Gastrocnemius medialis (tissue), 4 donors: ENCODE measurements at regions of chr6 and their contacts with region 1.

Region 1: GRCh38 chr6:89080542-89081422 is at the start of gene PNRC1:
- DNase-seq: peak; percentile 100
- ATAC-seq: peak; percentile 70 to 75
- H3K4me3 ChIP-seq: peak within 1 kb of the TSS; percentile 94 to 99 (median 95)
- H3K27ac ChIP-seq: peak within 1 kb of the TSS; percentile 98 to 100 (median 99)
- H3K4me1 ChIP-seq: peaks cover 20 to 30% of the 10 kb centered on the region in 2 donors
- H3K27me3 ChIP-seq: no peaks in the 10 kb centered on the region
- CTCF ChIP-seq: peak in 2 of 5 experiments; percentile 5 to 13
- POLR2A ChIP-seq: peak; percentile 100
- total RNA-seq, gene PNRC1: 229 to 458 (median 311) TPM

Region 2: DNA sequence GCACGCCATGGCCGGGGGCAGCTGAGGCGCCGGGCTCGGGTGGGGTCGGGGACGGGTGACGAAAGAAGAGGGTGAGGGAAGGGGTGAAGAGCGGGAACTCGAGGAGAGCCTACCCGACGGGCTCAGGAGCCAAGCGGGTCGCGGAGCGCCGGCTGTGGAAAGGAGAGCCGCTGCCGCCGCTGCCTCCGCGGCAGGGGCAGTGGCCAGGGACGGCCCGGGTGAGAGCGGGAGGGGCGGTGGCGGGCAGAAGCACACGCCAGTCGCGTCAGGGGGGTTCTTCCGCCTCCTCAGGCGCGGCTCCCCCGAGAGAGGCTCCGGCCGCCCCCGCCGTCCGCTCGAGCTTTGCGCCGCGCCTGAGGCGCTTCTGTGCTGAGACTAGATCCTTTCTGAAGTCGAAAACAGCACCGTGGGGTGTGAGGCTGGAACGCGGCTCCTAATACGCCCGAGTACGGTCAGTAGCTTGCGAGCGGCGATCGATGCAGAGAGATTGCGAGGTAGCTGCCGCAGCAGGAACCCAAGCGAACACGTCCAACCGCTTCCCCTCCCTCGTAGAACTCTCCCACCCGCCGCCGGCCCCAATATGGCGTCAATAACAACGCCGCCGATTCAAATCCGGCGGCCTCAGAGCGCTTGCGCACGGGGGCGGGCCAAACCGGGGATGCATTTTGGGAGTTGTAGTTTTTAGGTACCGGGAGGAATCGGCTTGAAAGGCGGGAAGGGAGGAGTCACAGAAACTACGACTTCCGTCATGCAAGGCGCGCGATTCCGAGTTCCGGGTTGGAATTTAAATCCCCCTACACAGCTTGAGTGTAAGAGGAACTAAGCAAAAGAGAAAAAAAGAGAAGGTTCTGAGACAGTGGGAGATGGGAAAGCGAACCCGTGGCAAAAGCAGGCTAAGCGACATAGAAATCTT is 1378.8 kb before region 1 on chr6 and contains the start of gene AKIRIN2:
- in situ Hi-C with region 1: no loop called
- intact Hi-C with region 1: loop called (anchors 5 kb)
- DNase-seq: peak; percentile 97
- ATAC-seq: peak; percentile 80 to 81
- H3K4me3 ChIP-seq: peak within 1 kb of the TSS; percentile 86 to 94 (median 94)
- H3K27ac ChIP-seq: peak within 1 kb of the TSS; percentile 94 to 99 (median 97)
- H3K4me1 ChIP-seq: peaks cover 24 to 32% of the 10 kb centered on the region in 2 donors
- H3K27me3 ChIP-seq: no peaks in the 10 kb centered on the region
- CTCF ChIP-seq: no peak
- POLR2A ChIP-seq: peak; percentile 99 to 100
- total RNA-seq, gene AKIRIN2: 25.6 to 44.5 (median 33.1) TPM

Region 3: DNA sequence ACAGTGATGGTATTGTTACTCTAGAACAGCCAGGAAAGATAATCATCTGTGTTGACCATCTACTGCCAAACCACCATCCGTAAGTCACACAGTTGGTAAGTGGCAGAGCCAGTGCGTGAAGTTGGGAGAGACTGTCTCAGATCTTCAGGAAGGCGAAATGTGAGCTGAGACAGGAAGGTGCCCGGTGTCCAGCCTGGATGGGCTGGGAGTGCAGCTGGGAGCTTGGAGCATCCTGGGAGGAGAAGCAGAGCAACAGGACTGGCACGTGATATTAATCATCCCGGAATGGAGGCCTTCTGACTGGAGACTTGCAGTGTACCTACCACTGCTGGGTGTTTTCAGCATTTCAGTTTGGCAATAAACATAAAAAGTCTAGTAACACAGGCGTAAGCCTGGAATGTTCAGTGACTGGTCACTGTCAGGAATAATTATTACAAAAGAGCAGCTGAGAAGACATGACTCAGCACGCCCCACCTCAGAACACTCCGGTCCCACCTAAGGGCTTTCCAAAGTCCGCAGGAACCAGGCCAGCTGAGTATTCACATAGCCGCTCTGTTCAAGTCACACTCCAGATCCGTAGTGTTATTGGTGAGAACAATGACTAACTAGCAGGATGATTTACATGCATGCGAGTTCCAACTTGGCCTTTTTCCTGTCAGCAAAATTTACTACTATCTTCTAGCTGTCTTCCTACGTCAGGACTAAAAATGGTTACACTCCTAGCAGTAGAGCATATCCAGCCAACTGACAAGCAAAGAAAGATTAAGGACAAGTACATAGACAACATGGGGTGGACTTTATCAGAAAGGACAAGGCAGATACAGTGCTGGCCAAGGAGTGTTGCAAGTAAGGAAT is 45.3 kb before region 1 on chr6:
- in situ Hi-C with region 1: loop called in 1 of 4 experiments (anchors 5 kb)
- intact Hi-C with region 1: loop called (anchors 1 kb)
- DNase-seq: peak; percentile 97 to 98
- ATAC-seq: peak; percentile 81 to 87
- H3K4me3 ChIP-seq: peak overlapping the region in 3 of 4 donors; percentile 14 to 43 (median 24)
- H3K27ac ChIP-seq: peak overlapping the region; percentile 90 to 94 (median 92)
- H3K4me1 ChIP-seq: peaks cover 38 to 46% of the 10 kb centered on the region in 2 donors
- H3K27me3 ChIP-seq: no peaks in the 10 kb centered on the region
- CTCF ChIP-seq: no peak
- POLR2A ChIP-seq: peak; percentile 75 to 82

Region 4: DNA sequence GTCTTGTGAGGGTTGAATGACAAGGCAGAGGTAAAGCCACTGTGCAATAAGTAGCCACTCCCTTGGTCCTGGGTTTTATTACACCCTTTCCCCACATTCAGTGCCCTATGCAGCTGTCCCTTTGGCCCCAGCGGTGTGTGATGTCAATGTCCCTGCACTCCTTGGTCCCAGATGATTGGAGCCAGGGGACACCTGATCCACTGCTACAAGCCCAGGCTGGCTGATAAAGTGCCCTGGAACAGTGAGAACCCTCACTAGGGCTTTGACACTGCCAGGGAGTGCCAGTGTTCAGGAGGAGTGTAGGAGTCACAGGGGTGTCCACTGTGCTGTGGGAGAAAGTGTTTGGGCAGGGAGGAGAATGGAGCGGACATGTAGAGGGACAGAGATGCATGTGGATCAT is 106.0 kb after region 1 on chr6:
- in situ Hi-C with region 1: no loop called
- intact Hi-C with region 1: loop called (anchors 2 kb)
- DNase-seq: peak; percentile 84 to 98
- ATAC-seq: peak; percentile 98
- H3K4me3 ChIP-seq: no peak overlapping the region
- H3K27ac ChIP-seq: peak overlapping the region; percentile 76 to 95 (median 84)
- H3K4me1 ChIP-seq: peaks cover 8 to 18% of the 10 kb centered on the region in 2 donors
- H3K27me3 ChIP-seq: no peaks in the 10 kb centered on the region
- CTCF ChIP-seq: no peak
- POLR2A ChIP-seq: peak; percentile 82 to 92

Region 5: DNA sequence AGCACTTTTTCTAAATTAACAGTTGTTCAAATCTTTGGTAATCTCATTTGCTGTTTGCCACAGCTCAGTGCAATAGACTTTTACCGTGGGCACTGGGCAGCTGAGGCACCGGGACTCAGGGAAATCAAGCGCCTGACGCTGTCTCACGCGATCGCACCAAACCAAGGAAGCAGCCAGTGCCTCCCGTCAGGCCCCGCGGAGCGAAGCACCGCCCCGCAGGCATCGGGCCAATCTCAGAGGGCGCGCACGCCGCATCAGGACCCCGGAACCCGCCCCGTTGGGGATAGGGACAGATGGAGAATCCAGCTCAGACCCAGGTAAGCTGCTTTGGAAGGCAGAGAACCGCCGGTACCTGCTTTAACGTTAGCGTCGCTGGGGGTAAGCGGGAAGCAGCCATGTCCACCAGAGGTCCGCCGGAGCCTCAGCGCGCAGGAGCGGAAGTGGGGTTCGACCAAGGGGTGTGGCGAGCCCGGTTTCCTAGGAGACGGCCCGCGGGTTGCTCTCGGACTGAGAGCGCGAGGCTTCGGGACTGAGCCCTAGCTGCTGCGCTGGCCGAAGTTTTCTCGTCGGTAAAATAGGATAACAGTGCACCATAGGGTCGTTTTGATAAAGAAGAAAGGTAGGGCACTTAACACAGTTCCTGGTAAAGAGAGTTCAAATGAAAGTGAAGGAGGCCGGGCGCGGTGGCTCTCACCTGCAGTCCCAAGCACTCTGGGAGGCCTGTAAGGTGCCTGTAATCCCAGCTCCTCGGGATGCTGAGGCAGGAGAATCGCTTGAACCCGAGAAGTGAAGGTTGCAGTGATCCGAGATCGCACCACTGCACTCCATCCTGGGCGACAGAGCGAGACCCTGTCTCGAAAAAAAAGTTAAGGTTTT is 557.8 kb after region 1 on chr6 and contains the start of gene LYRM2:
- in situ Hi-C with region 1: no loop called
- intact Hi-C with region 1: loop called (anchors 5 kb)
- DNase-seq: peak; percentile 93 to 94
- ATAC-seq: peak; percentile 97 to 98
- H3K4me3 ChIP-seq: peak within 1 kb of the TSS; percentile 76 to 88 (median 85)
- H3K27ac ChIP-seq: peak within 1 kb of the TSS; percentile 90 to 98 (median 95)
- H3K4me1 ChIP-seq: peaks cover 14% of the 10 kb centered on the region in 2 donors
- H3K27me3 ChIP-seq: no peaks in the 10 kb centered on the region
- CTCF ChIP-seq: peak in 4 of 5 experiments; percentile 5 to 27 (median 19)
- POLR2A ChIP-seq: peak; percentile 90 to 91
- total RNA-seq, gene LYRM2: 15.8 to 40.2 (median 23.3) TPM